Left cardiac atrium (tissue), 4 donors: ENCODE measurements at regions of chr19 and their contacts with region 1.

Region 1: DNA sequence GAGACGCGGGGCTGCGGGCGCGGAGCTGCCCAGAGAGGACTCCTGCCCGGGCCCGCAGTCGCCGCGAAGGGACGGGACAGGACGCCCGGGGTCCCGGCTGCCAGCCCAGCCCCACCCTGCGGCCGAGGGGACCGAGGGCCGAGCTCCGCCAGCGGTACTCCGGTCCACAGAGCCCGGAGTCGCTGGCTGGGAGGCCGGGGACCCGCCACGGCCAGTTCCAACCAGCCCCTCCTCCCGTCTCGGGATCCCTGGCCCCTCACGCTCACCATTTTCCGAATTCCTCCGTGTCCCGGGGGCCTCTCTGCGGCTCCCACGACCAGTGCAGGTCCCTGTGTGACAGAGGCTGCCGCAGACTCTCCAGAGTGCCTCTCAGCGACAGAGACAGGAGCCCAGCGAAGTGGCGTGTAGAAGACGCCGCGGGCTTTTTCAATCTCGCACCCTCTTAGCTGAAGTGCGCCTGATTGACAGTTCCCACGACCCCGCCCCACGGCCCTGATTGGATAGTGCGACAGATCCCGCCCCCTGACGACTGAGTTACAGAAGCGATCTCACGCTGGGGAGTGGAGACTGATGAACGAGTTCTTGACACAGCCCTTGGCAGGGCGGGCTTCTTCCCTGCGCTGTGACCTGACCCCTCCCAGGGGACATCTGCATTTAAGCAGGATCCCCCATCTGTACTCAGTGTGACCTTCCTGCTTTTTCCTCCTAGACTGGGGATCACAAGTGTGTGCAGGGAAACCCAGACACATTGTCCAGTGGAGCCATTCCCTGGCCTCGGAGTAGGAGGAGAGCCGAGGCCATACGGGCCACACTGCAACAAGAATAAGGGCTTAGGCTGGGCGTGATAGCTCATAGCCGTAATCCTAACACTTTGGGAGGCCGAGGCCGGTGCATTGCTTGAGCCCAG is 44.0 kb downstream of the ZNF823 start:
- DNase-seq: peak; percentile 97
- ATAC-seq: peak; percentile 100

Region 2: DNA sequence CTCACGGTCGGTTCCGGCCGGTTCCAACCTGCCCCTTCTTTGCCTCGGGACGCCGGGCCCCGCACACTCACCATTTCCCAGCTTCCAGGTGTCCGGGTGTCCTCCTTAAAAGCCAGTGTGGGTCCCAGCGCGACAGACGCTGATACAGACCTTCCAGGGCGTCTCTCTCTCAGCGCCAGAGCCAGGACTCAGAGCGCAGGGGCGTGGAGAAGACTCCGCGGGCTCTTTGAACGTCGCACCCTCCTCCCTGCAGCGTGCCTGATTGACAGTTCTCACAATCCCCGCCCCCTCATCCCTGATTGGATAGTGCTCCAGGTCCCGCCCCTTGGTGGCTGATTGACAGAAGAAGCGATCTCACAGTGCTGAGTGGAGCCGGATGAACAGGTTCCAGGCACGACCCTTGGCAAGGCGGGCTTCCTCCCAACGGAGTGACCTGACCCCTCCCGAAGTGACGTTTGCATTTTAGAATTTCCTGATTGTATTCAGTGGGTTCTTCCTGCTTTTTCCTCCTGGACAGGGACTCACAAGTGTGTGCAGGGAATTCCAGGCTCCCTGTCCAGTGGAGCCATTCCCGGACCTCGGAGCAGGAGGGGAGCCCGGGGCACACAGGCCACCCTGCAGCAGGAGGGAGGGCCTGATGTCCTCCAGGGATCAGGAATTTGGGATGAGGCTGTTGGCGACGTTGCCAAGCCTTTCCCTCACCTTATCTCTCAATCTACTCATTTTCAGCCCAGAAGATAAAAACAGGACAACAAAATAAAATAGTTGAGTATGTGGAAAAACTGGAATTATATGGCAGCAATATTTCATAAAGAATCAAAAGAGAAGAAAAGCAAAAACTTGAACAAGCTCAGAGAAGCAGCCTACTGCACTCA is 44.2 kb after region 1 on chr19 and contains the start of gene ZNF823:
- intact Hi-C with region 1: loop called in 1 of 2 experiments (anchors 5 kb)
- DNase-seq: peak; percentile 99
- ATAC-seq: peak; percentile 99
- total RNA-seq, gene ZNF823: 3.5 to 4.5 TPM

Region 3: DNA sequence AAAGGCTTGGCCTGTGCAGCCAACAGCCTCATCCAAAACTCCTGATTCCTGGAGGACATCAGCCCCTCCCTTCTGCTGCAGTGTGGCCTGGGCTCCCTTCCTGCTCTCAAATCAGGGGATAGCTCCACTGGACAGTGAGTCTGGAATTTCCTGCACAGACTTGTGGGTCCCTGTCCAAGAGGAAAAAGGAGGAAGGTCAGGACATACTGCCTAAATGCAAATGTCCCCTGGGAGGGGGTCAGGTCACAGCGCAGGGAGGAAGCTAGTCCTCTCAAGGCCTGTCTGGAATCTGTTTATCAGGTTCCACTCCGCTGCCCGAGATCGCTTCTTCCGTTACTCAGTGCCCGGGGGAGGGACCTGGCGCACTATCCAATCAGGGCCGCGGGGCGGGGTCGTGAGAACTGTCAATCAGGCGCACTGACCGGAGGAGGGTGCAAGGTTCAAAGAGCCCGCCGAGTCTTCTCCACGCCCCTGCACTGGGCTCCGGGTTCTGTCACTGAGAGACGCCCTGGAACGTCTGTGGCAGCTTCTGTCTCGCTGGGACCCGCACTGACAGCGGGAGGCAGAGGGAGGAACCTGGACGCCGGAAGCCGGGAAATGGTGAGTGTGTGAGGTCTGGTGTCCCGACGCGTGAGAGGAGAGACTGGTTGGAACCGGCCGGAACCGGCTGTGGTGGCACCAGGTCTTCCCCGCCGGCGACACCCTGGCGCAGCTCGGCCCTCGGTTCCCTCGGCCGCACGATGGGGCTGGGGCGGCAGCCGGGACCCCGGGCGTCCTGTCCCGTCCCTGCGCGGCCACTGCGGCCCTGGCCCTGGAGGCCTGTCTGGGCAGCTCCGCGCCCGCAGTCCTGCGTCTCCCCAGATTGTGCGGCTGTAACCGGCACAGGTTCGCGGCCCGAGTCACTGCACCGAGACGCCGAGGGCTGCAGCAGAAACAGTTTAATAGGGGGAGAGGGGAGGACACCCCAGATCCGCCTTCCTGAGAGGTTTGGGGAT is 72.1 kb after region 1 on chr19 and contains the start of gene ZNF441:
- intact Hi-C with region 1: loop called in 1 of 2 experiments (anchors 10 kb)
- DNase-seq: peak; percentile 98
- ATAC-seq: peak; percentile 99 to 100
- total RNA-seq, gene ZNF441: 4.2 to 4.6 TPM